AG04449 (cell line): ENCODE measurements at regions of chr2 and their contacts with region 1.

Region 1: GRCh38 chr2:72862239-72862988 is 24.8 kb upstream of the SPR start:
- DNase-seq: peak; percentile 38
- H3K4me3 ChIP-seq: peak overlapping the region; percentile 39
- CTCF ChIP-seq: peak; percentile 100

Region 2: GRCh38 chr2:72770879-72771461 is 91.4 kb before region 1 on chr2:
- CTCF ChIA-PET with region 1: interaction called, 87 read pairs
- POLR2A ChIA-PET with region 1: no interaction called
- DNase-seq: no peak
- H3K4me3 ChIP-seq: no peak overlapping the region
- CTCF ChIP-seq: peak; percentile 63

Region 3: DNA sequence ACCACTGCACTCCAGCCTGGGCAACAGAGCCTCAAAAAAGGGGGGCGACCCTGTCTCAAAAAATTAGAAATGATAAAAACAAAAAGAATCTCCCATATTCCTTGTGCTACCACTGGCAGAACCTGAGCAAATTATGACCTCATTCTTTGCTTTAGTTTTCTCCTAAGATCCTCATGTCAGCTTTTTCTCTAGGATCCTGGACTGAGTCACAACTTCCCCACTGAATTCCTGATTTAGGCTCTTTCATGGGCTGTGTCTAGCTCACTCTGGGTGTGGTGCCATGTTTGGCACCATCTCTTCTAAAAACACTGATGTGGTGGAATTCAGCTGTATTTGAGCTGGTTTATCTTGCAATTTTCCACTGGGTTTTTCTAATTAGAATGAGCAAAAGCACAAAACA is 73.7 kb before region 1 on chr2:
- CTCF ChIA-PET with region 1: interaction called, 31 read pairs
- POLR2A ChIA-PET with region 1: no interaction called
- DNase-seq: no peak
- H3K4me3 ChIP-seq: no peak overlapping the region
- CTCF ChIP-seq: no peak

Region 4: DNA sequence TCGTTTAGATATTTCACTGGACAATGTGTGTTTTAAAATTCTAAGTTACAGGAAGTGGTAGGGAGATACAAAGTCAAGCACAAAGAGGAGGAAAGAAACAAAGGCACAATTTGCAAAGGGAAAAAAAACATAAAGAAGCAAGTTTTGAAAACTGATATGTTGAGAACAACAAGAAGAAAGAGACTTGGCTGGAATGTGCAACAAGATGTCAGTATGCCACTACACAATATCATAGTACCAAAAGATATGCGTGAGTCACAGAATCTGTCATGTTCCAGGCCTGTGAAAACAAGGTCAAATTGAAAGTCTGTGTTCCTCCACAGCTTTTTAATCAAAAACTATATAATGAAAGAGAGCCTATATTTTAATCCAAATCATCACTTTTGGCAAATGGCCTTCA is 48.6 kb before region 1 on chr2:
- CTCF ChIA-PET with region 1: interaction called, 10 read pairs
- POLR2A ChIA-PET with region 1: interaction called, 3 read pairs
- DNase-seq: no peak
- H3K4me3 ChIP-seq: no peak overlapping the region
- CTCF ChIP-seq: no peak

Region 5: GRCh38 chr2:72837171-72837570 is 25.2 kb before region 1 on chr2:
- CTCF ChIA-PET with region 1: interaction called, 51 read pairs
- POLR2A ChIA-PET with region 1: no interaction called
- DNase-seq: no peak
- H3K4me3 ChIP-seq: no peak overlapping the region
- CTCF ChIP-seq: no peak

Region 6: GRCh38 chr2:72940786-72941185 is 78.4 kb after region 1 on chr2:
- CTCF ChIA-PET with region 1: no interaction called
- POLR2A ChIA-PET with region 1: no interaction called
- DNase-seq: peak; percentile 56
- H3K4me3 ChIP-seq: no peak overlapping the region
- CTCF ChIP-seq: no peak

Region 7: GRCh38 chr2:73020657-73021370 is 158.4 kb after region 1 on chr2:
- CTCF ChIA-PET with region 1: no interaction called
- POLR2A ChIA-PET with region 1: no interaction called
- DNase-seq: peak; percentile 69
- H3K4me3 ChIP-seq: no peak overlapping the region
- CTCF ChIP-seq: no peak